ENCODE measurements at regions of chr5 and their contacts with region 1.

Region 1: GRCh38 chr5:68884883-68885282 is 208.9 kb upstream of the SLC30A5 start:
- DNase-seq: no peak
- ATAC-seq: no peak
- H3K4me3 Mint-ChIP-seq: no peak overlapping the region
- H3K27ac Mint-ChIP-seq: no peak overlapping the region
- H3K4me1 Mint-ChIP-seq: peaks cover 22% of the 10 kb centered on the region
- H3K27me3 Mint-ChIP-seq: no peaks in the 10 kb centered on the region

Region 2: GRCh38 chr5:67724412-67725135 is 1160.3 kb before region 1 on chr5:
- CTCF ChIA-PET with region 1: no interaction called
- POLR2A ChIA-PET with region 1: no interaction called
- DNase-seq: no peak
- ATAC-seq: no peak
- H3K4me3 Mint-ChIP-seq: no peak overlapping the region
- H3K27ac Mint-ChIP-seq: no peak overlapping the region
- H3K4me1 Mint-ChIP-seq: no peaks in the 10 kb centered on the region
- H3K27me3 Mint-ChIP-seq: peaks cover 2% of the 10 kb centered on the region

Region 3: GRCh38 chr5:68872088-68872839 is 12.6 kb before region 1 on chr5:
- CTCF ChIA-PET with region 1: interaction called, 10 read pairs
- POLR2A ChIA-PET with region 1: no interaction called
- DNase-seq: no peak
- ATAC-seq: no peak
- H3K4me3 Mint-ChIP-seq: no peak overlapping the region
- H3K27ac Mint-ChIP-seq: no peak overlapping the region
- H3K4me1 Mint-ChIP-seq: peaks cover 9% of the 10 kb centered on the region
- H3K27me3 Mint-ChIP-seq: no peaks in the 10 kb centered on the region

Region 4: GRCh38 chr5:68932830-68933434 is 48.0 kb after region 1 on chr5:
- CTCF ChIA-PET with region 1: no interaction called
- POLR2A ChIA-PET with region 1: no interaction called
- DNase-seq: peak; percentile 25
- ATAC-seq: no peak
- H3K4me3 Mint-ChIP-seq: no peak overlapping the region
- H3K27ac Mint-ChIP-seq: no peak overlapping the region
- H3K4me1 Mint-ChIP-seq: no peaks in the 10 kb centered on the region
- H3K27me3 Mint-ChIP-seq: peaks cover 4% of the 10 kb centered on the region